MCF 10A (cell line): ENCODE measurements at regions of chr5 and their contacts with region 1.

Region 1: DNA sequence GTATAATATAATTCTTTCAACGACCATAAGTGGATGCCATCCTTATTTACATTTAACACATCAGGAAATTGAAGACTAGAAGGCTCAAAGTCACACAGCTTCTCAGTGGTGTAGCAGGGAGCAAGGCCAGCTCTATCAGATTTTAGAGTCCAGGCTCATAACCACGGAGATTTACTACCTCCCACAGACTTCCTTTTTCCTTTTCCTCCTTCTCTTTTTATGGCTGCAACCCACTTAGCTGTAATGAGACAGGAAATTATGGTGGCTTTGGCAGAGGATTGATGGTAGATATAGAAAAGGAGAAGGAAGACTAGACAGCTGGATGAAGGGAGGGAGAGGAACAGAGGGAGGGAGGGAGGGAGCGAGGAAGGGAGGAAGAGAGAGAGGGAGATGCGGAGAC is 47.4 kb downstream of the SPEF2 start:
- DNase-seq: no peak
- H3K4me3 Mint-ChIP-seq: no peak overlapping the region
- H3K27ac Mint-ChIP-seq: no peak overlapping the region
- H3K4me1 Mint-ChIP-seq: no peaks in the 10 kb centered on the region
- H3K27me3 Mint-ChIP-seq: no peaks in the 10 kb centered on the region
- CTCF ChIP-seq: no peak

Region 2: DNA sequence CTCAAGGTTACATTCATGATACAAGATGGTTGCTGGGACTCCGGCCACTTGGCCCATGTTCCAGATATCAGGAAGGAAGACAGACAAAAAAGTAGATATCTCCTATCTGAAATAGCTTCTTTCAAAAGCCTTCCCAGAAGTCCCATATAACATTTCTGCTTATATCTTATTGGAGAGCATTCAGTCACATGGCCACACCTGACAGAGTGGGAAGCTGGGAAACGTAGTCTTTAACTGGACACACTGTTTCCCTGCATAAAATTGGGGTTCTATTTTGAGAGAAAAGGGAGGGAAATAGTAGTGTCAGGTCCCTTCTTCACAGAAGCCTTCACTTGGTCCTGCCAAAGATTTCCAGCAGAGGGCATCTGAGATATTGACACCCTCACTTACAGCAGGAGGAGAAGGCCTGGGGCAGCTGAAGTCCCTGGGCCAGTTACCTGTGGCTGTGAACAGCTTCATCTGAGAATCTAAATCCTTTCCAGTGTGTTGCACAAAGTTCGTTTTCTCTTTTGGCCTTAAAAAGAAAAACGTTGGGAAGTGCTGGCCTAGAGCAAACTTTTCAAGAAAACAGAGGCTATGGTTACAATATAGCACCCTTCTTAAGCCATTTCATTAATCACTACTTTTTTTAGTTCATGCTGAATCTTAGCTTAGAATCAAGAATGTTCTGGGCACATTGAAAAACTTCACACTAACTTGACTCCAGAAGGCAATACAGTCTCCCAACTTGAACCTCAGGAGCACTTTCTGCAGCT is 13.9 kb before region 1 on chr5:
- CTCF ChIA-PET with region 1: interaction called, 26 read pairs
- POLR2A ChIA-PET with region 1: interaction called, 3 read pairs
- intact Hi-C with region 1: no loop called
- DNase-seq: peak; percentile 68
- H3K4me3 Mint-ChIP-seq: no peak overlapping the region
- H3K27ac Mint-ChIP-seq: no peak overlapping the region
- H3K4me1 Mint-ChIP-seq: no peaks in the 10 kb centered on the region
- H3K27me3 Mint-ChIP-seq: no peaks in the 10 kb centered on the region
- CTCF ChIP-seq: peak; percentile 49